Esophagus muscularis mucosa (tissue), 4 donors: ENCODE measurements at regions of chr22 and their contacts with region 1.

Region 1: GRCh38 chr22:27094633-27095308 is 437.4 kb downstream of the MIAT start:
- DNase-seq: no peak
- H3K4me3 ChIP-seq: no peak overlapping the region
- H3K27ac ChIP-seq: peak overlapping the region in 1 of 4 donors; percentile 37
- H3K4me1 ChIP-seq: peaks cover 0 to 33% (median 25%) of the 10 kb centered on the region in 4 donors
- H3K27me3 ChIP-seq: no peaks in the 10 kb centered on the region
- CTCF ChIP-seq: no peak
- EP300 ChIP-seq: no peak
- POLR2A ChIP-seq: no peak

Region 2: GRCh38 chr22:26922806-26923205 is 172.0 kb before region 1 on chr22:
- intact Hi-C with region 1: no loop called
- DNase-seq: no peak
- H3K4me3 ChIP-seq: no peak overlapping the region
- H3K27ac ChIP-seq: no peak overlapping the region
- H3K4me1 ChIP-seq: no peaks in the 10 kb centered on the region
- H3K27me3 ChIP-seq: no peaks in the 10 kb centered on the region
- CTCF ChIP-seq: no peak
- EP300 ChIP-seq: no peak
- POLR2A ChIP-seq: no peak

Region 3: DNA sequence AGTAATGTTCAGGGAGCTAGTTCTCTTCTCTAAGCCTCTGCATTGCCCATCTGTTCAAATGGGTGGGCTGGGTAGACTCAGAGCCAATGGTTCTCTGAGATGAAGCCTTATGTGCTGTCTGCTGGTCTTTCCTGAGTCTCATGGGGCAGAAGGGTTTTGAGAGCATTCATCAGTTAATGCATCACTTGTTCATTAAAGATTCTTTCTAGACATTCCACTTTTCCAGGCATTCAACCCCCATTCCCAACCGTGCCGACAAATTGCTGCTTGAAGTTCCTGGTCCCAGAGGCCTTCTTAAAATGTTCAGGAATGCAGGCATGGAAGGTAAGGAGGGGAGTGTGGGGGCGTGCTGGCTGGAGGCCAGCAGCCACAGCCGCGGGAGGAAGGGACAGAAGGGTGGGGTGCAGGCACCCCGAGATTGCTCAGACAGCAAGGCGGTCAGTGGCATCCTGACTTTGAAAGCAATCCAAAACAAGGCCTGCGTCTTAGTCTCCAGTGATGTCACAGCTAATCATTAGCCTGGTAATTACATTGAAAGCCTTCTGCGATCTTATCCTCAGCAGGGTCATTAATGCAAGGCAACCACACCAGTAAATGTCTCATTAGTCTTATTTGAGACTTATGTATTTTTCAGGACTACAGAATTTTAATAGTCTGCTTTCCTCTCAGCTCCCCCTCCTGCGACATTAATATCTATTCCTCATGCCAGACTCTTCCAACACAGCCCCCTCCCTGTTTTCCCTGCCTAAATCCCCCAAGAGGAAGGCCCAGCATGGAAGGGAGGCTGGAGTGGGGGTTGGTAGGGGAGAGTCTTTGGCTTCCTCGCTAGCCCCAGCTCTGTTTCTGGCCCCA is 108.6 kb before region 1 on chr22:
- intact Hi-C with region 1: loop called (anchors 10 kb)
- DNase-seq: no peak
- H3K4me3 ChIP-seq: no peak overlapping the region
- H3K27ac ChIP-seq: no peak overlapping the region
- H3K4me1 ChIP-seq: peaks cover 4 to 20% (median 17%) of the 10 kb centered on the region in 4 donors
- H3K27me3 ChIP-seq: no peaks in the 10 kb centered on the region
- CTCF ChIP-seq: no peak
- EP300 ChIP-seq: no peak
- POLR2A ChIP-seq: no peak

Region 4: DNA sequence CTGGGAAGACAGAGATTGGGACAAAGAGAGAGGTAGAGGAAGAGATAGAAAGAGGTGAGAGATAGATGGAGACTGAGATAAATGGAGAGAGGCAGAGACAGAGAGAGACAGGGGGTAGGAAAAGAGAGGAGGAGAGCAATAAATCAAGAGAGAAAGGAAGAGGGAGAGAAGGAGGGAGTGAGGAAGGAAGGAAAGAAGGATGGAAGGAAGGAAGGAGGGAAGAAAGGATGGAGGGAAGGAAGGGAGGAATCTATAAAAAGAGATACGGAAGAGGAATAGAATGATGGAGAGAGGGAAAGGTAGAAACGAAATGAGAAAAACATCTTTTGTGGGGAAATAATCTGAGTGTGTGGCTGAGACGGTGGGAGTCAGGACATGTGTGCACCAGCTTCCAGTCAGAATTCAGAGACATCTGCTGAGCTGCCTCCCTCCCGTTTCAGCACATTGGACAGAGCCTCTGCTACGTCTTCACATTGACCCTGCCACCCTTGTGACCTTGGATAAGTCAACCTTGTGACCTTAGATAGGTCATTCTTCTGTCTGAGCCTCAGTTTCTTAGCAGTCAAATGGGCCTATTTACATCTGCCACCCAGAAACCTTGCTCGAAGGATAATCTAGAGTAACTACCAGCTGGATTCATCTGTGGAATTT is 19.6 kb before region 1 on chr22:
- intact Hi-C with region 1: no loop called
- DNase-seq: no peak
- H3K4me3 ChIP-seq: no peak overlapping the region
- H3K27ac ChIP-seq: no peak overlapping the region
- H3K4me1 ChIP-seq: no peaks in the 10 kb centered on the region
- H3K27me3 ChIP-seq: peaks cover 0 to 4% (median 2%) of the 10 kb centered on the region in 4 donors
- CTCF ChIP-seq: no peak
- EP300 ChIP-seq: no peak
- POLR2A ChIP-seq: no peak